ENCODE measurements at regions of chr14 and their contacts with region 1.

Region 1: GRCh38 chr14:74612350-74613021 is 449 bp upstream of the LTBP2 start:
- DNase-seq: peak; percentile 77
- H3K4me3 ChIP-seq: peak overlapping the region; percentile 81 to 88 (median 88)
- H3K27ac ChIP-seq: peak overlapping the region; percentile 52
- H3K4me1 ChIP-seq: peaks cover 65% of the 10 kb centered on the region
- H3K27me3 ChIP-seq: no peaks in the 10 kb centered on the region
- CTCF ChIP-seq: peak in 1 of 2 donors; percentile 74
- POLR2A ChIP-seq: peak; percentile 48

Region 2: DNA sequence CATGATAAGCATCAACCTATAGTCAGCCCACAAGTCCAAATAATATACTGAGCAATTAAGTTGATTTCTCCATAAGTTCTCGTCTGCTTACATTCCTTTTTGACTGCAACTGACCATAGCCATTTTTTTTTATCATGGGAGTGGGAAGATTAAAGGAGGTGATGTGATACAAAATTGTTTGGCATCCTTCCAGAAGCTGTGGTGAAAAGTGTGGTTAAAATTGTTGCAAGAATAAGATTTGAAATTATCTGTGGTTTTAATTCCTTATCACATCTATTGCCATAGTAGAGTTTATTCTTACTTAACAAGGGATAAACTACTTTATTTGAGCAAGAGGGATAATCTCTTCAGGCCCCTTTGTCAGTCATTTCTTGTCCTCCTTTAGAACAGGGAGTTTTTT is 477.1 kb before region 1 on chr14:
- CTCF ChIA-PET with region 1: no interaction called
- POLR2A ChIA-PET with region 1: no interaction called
- dilution Hi-C with region 1: no loop called
- intact Hi-C with region 1: no loop called
- DNase-seq: no peak
- H3K4me3 ChIP-seq: no peak overlapping the region
- H3K27ac ChIP-seq: no peak overlapping the region
- H3K4me1 ChIP-seq: peaks cover 5% of the 10 kb centered on the region
- H3K27me3 ChIP-seq: no peaks in the 10 kb centered on the region
- CTCF ChIP-seq: no peak
- POLR2A ChIP-seq: no peak

Region 3: GRCh38 chr14:74362361-74362915 is 250.0 kb before region 1 on chr14:
- CTCF ChIA-PET with region 1: no interaction called
- POLR2A ChIA-PET with region 1: no interaction called
- dilution Hi-C with region 1: no loop called
- intact Hi-C with region 1: loop called (anchors 5 kb)
- DNase-seq: peak; percentile 68
- H3K4me3 ChIP-seq: no peak overlapping the region
- H3K27ac ChIP-seq: no peak overlapping the region
- H3K4me1 ChIP-seq: no peaks in the 10 kb centered on the region
- H3K27me3 ChIP-seq: peaks cover 2 to 3% of the 10 kb centered on the region in 2 experiments
- CTCF ChIP-seq: peak; percentile 90 to 93
- POLR2A ChIP-seq: no peak

Region 4: DNA sequence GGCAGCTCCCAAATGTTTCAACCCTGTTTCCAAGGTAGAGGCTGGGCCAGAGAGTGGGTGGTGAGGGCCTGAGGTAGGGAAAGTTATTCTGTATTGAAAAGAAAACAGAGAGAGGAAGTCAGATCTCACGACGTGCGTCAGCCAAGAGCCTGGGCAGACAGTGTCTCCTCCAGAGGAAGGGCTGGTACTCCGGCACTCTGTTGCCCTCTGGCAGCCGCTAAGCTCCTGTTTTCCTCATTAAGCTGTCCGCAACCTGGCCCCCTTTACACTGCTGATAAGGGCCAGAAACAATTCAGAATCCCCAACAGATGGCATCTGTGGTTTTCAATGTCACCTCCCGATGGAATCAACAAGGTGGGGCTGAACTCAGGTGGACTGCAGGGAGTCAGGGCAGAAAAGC is 25.6 kb after region 1 on chr14:
- CTCF ChIA-PET with region 1: interaction called, 96 read pairs
- POLR2A ChIA-PET with region 1: interaction called, 3 read pairs
- dilution Hi-C with region 1: no loop called
- intact Hi-C with region 1: loop called (anchors 1 kb)
- DNase-seq: peak; percentile 83
- H3K4me3 ChIP-seq: no peak overlapping the region
- H3K27ac ChIP-seq: peak overlapping the region; percentile 88
- H3K4me1 ChIP-seq: peaks cover 20% of the 10 kb centered on the region
- H3K27me3 ChIP-seq: no peaks in the 10 kb centered on the region
- CTCF ChIP-seq: peak; percentile 14 to 26
- POLR2A ChIP-seq: peak; percentile 35

Region 5: GRCh38 chr14:74671789-74672188 is 59.3 kb after region 1 on chr14:
- CTCF ChIA-PET with region 1: interaction called, 31 read pairs
- POLR2A ChIA-PET with region 1: interaction called, 5 read pairs
- dilution Hi-C with region 1: no loop called
- intact Hi-C with region 1: no loop called
- DNase-seq: peak; percentile 85
- H3K4me3 ChIP-seq: no peak overlapping the region
- H3K27ac ChIP-seq: peak overlapping the region; percentile 89
- H3K4me1 ChIP-seq: peaks cover 43% of the 10 kb centered on the region
- H3K27me3 ChIP-seq: no peaks in the 10 kb centered on the region
- CTCF ChIP-seq: no peak
- POLR2A ChIP-seq: no peak

Region 6: DNA sequence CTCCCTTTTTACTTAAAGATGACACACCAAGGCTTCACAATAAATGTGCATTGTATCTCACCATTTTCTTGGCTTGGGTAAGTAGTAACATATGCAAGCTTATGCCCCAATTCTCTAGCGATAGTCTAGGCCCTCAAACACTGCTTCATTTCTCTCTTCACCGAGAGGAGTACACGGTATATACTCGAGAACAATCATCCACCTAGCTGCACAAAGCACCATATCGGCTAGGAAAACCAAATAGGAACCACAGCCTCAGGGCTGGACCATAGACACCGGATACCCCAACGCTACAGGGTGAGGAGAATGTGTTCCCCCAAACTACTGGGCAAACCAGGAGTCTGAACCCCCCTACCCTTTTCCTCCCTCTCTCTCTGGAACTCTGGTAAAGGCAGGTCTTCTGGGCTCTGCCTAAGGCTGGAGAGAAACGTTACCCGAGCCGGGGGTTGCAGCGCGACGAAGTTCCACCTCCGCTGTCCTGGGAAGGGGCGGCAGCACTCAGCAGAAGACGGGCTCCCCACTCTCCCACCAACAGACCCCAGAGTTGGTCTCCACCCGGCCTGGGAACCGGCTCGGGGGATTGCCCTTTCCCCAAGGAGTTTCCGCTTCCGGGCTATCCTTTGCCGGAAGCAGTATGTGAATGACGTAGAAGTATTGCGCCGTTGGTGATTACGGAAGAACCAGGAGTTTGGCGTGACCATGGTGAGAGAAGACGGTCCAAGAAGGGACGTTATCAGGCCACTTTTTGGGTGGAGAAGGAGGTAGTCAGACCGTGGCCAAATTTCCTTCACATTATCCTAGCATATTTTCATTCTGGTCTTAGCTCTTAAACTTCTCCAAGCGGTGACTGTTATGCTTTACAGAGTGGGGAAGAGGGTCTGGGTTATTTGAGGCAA is 100.3 kb after region 1 on chr14 and contains the starts of genes AREL1 and FCF1:
- CTCF ChIA-PET with region 1: interaction called, 10 read pairs
- POLR2A ChIA-PET with region 1: no interaction called
- dilution Hi-C with region 1: no loop called
- intact Hi-C with region 1: loop called (anchors 1 kb)
- DNase-seq: peak; percentile 87
- H3K4me3 ChIP-seq: peak within 1 kb of the TSS; percentile 66 to 93 (median 92)
- H3K27ac ChIP-seq: peak within 1 kb of the TSS; percentile 37
- H3K4me1 ChIP-seq: peaks cover 15% of the 10 kb centered on the region
- H3K27me3 ChIP-seq: no peaks in the 10 kb centered on the region
- CTCF ChIP-seq: no peak
- POLR2A ChIP-seq: peak; percentile 75
- total RNA-seq, gene AREL1: 46.4 and 50.3 TPM in 2 replicates
- total RNA-seq, gene FCF1: 57.8 and 58.2 TPM in 2 replicates

Region 7: GRCh38 chr14:74793506-74794168 is 181.2 kb after region 1 on chr14:
- CTCF ChIA-PET with region 1: interaction called, 39 read pairs
- POLR2A ChIA-PET with region 1: no interaction called
- dilution Hi-C with region 1: no loop called
- intact Hi-C with region 1: loop called (anchors 1 kb)
- DNase-seq: peak; percentile 63
- H3K4me3 ChIP-seq: peak overlapping the region in 1 of 3 experiments; percentile 38
- H3K27ac ChIP-seq: peak overlapping the region; percentile 77
- H3K4me1 ChIP-seq: peaks cover 31% of the 10 kb centered on the region
- H3K27me3 ChIP-seq: no peaks in the 10 kb centered on the region
- CTCF ChIP-seq: peak; percentile 51 to 62
- POLR2A ChIP-seq: no peak

Region 8: DNA sequence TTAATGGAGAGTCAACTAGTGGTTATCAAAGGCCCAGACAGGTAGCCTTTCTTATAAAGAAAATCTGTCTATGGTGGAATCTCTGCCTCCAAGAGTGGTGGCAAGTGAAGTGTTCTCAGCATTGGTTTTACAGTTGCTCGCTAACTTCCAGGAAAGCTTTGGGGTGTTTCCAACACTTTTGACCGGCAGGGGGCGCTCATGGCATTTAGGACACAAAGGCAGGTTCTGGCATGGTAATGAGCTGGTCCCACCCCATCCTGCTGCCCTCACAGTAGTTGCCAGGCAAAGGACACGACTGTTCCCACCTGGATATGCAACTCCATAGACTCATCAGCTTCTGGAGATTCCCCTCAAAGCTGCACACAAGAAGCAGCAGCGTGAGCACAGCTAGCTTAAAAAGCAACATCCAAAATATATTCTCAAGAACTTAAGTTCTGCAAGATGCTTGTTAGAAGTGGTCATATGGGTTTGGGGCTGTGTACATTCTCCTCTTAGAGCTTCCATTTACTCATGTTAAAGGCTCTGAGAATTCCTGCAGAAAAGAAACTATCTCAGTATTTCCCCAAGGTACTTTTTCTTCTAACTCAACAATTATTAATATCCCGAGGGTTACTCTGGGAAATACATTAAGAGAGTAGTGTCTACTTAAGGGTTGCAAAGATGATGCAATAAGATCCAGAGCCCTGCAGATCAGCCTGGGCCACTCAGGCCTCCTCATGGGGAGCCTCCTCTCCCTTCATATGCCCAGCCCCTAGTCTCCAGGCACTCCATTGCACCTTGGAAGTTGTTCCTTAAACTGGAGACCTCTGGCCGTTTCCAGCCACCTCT is 248.6 kb after region 1 on chr14:
- CTCF ChIA-PET with region 1: interaction called, 12 read pairs
- POLR2A ChIA-PET with region 1: no interaction called
- dilution Hi-C with region 1: no loop called
- intact Hi-C with region 1: no loop called
- DNase-seq: peak; percentile 83
- H3K4me3 ChIP-seq: no peak overlapping the region
- H3K27ac ChIP-seq: no peak overlapping the region
- H3K4me1 ChIP-seq: no peaks in the 10 kb centered on the region
- H3K27me3 ChIP-seq: no peaks in the 10 kb centered on the region
- CTCF ChIP-seq: peak; percentile 85 to 86
- POLR2A ChIP-seq: no peak